Heart left ventricle (tissue), 16 donors: ENCODE measurements at regions of chr11 and their contacts with region 1.

Region 1: GRCh38 chr11:44727373-44728287 is 868 bp downstream of the TSPAN18 start:
- DNase-seq: peak; percentile 88 to 92 (median 89)
- ATAC-seq: peak; percentile 82 to 86 (median 84)
- H3K4me3 ChIP-seq: peak overlapping the region; percentile 76 to 98 (median 86)
- H3K27ac ChIP-seq: peak overlapping the region; percentile 74 to 96 (median 88)
- H3K4me1 ChIP-seq: peaks cover 0 to 70% (median 48%) of the 10 kb centered on the region in 12 donors
- H3K27me3 ChIP-seq: peaks cover 0 to 26% (median 0%) of the 10 kb centered on the region in 9 donors
- CTCF ChIP-seq: peak; percentile 93 to 98 (median 96)
- POLR2A ChIP-seq: no peak

Region 2: DNA sequence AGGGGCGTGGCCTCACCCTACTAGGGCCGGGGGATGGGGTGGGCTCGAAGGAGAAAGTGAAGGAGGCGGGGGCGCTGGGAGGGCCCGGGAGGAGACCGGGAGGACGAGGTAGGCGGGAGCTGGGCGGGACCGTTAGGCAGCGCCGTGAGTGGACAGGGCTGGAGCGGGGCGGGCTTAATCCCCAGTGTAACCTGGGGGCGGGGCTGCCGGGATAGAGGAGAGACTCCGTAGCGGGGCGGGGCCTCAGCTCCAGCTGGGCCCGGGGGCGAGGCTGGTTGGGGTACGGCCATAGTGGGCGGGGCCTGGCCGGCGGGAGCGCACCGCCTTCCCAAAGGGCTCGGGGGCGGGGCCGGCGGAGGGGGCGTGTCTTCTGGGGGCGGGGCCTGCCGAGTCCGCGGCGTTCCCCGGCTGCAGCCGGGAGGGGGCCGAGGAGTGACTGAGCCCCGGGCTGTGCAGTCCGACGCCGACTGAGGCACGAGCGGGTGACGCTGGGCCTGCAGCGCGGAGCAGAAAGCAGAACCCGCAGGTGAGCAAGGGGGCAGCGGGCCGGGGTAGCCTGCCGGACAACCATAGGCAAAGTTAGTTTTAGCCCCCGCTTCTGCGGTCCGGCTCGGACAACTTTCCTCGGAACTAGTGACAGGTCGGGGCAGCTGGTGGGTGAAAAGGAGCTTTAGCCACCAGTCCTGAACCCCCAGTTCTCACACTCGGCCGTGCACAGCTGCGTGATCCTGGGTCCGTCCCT is 162.2 kb before region 1 on chr11 and contains the start of gene CD82:
- intact Hi-C with region 1: loop called in 4 of 10 experiments (anchors 5 to 10 kb)
- DNase-seq: peak; percentile 100
- ATAC-seq: peak; percentile 96 to 97 (median 96)
- H3K4me3 ChIP-seq: peak within 1 kb of the TSS; percentile 28 to 74 (median 60)
- H3K27ac ChIP-seq: peak within 1 kb of the TSS; percentile 90 to 99 (median 96)
- H3K4me1 ChIP-seq: peaks cover 20 to 67% (median 45%) of the 10 kb centered on the region in 12 donors
- H3K27me3 ChIP-seq: no peaks in the 10 kb centered on the region
- CTCF ChIP-seq: peak in 9 of 12 donors; percentile 8 to 54 (median 40)
- POLR2A ChIP-seq: peak in 1 of 2 donors; percentile 84
- total RNA-seq, gene CD82: 20.1 to 76.2 (median 37.3) TPM

Region 3: DNA sequence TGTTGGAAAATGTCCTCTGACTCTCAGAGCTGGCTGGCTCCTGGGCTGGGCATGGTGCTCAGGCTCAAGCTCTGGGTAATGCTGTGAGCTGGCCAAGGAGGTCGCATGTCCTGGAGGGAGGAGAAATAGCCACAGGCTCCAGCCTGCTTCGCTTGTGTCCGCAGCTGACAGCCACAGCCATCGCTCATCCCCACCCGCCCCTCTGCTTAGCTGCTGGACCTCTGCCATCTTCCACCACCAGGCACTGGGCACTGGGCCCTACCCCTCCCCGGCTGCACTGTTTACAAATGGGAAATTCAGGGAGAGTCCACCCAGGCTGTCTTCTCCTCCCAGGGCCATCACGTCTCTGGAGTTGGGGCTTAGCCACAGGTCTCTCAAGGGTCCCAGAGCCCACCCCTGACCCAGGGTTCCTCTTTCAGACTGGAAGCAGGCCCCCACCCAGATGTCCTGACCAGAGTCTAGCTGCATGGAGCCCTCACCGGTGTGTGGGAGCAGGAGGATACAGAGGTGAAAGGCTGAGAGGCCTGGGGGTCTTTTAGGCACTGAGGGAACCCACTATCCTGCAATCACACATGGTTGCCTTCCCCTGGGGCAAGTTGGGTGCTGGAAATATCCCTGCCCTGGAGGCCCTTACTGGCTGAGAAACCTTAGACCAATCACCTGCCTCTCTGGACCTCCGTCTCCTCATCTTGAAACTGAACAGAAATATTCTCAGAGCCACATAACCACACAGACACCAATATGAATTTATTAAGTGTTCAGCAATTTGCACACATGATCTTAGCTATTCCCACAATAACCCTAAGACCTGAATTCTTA is 99.5 kb before region 1 on chr11:
- intact Hi-C with region 1: loop called in 8 of 10 experiments (anchors 2 to 10 kb)
- DNase-seq: peak; percentile 84 to 90 (median 85)
- ATAC-seq: peak; percentile 76 to 87 (median 84)
- H3K4me3 ChIP-seq: no peak overlapping the region
- H3K27ac ChIP-seq: peak overlapping the region; percentile 42 to 87 (median 76)
- H3K4me1 ChIP-seq: peaks cover 7 to 64% (median 38%) of the 10 kb centered on the region in 12 donors
- H3K27me3 ChIP-seq: no peaks in the 10 kb centered on the region
- CTCF ChIP-seq: peak in 4 of 12 donors; percentile 9 to 19 (median 12)
- POLR2A ChIP-seq: no peak

Region 4: DNA sequence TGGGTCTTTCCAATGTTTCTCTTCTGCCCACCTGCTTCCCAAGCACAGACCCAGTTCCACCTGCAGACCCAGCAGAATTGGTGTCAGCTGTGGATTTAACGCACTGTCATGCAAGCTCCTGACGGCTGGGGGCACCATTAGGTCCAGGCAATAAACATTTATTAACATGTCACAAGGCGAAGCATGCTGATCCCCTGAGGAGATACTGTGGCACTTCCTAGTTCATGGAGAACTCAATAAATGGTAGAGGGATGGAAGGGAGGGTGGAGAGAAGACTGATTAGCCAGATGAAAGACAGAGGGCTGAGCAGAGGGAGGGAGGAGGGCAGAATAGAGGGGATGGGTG is 69.2 kb before region 1 on chr11:
- intact Hi-C with region 1: loop called in 2 of 10 experiments (anchors 2 to 5 kb)
- DNase-seq: no peak
- ATAC-seq: no peak
- H3K4me3 ChIP-seq: no peak overlapping the region
- H3K27ac ChIP-seq: no peak overlapping the region
- H3K4me1 ChIP-seq: peaks cover 0 to 29% (median 3%) of the 10 kb centered on the region in 12 donors
- H3K27me3 ChIP-seq: no peaks in the 10 kb centered on the region
- CTCF ChIP-seq: peak in 9 of 12 donors; percentile 6 to 39 (median 23)
- POLR2A ChIP-seq: no peak

Region 5: DNA sequence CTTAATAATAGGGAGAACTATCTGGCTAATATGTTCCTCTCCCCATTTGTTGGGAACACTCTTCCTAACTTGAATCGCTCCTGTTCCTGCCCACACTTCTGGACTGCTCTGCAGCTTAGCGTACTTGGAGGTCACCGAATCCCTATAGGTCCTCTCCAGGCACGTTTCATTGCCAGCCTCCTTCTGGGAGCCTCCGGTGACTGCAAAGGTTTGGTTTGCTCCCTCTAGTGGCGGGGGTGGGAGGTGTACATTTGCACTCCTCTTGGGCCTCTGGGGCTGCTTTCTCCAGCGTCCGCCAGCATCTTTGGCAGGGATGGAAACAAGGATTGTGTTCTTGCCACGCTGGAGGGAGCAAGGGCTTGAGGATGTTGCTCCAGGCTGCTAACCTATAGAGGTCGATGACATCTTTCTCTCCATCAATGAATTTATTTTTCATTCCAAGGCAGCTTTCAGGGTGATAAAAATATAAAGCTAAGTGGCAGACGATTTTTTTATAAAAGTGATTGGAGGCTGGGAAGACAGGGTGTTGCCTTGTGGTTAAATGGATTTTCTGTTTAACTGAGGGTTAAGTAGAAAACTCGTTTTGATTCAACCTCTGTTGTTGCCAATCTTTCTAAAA is 47.8 kb after region 1 on chr11:
- intact Hi-C with region 1: loop called (anchors 2 to 5 kb)
- DNase-seq: peak; percentile 50 to 75 (median 71)
- ATAC-seq: peak; percentile 21 to 53 (median 45)
- H3K4me3 ChIP-seq: no peak overlapping the region
- H3K27ac ChIP-seq: peak overlapping the region in 11 of 12 donors; percentile 29 to 92 (median 76)
- H3K4me1 ChIP-seq: peaks cover 7 to 91% (median 65%) of the 10 kb centered on the region in 12 donors
- H3K27me3 ChIP-seq: no peaks in the 10 kb centered on the region
- CTCF ChIP-seq: peak; percentile 56 to 77 (median 66)
- POLR2A ChIP-seq: no peak

Region 6: GRCh38 chr11:44893846-44894617 is 166.4 kb after region 1 on chr11:
- intact Hi-C with region 1: loop called (anchors 1 to 5 kb)
- DNase-seq: peak; percentile 69 to 84 (median 83)
- ATAC-seq: peak; percentile 84 to 92 (median 88)
- H3K4me3 ChIP-seq: no peak overlapping the region
- H3K27ac ChIP-seq: peak overlapping the region in 8 of 12 donors; percentile 18 to 78 (median 57)
- H3K4me1 ChIP-seq: peaks cover 0 to 39% (median 20%) of the 10 kb centered on the region in 12 donors
- H3K27me3 ChIP-seq: no peaks in the 10 kb centered on the region
- CTCF ChIP-seq: peak; percentile 80 to 95 (median 88)
- POLR2A ChIP-seq: no peak

Region 7: GRCh38 chr11:45021692-45022141 is 294.1 kb after region 1 on chr11:
- intact Hi-C with region 1: no loop called
- DNase-seq: peak; percentile 79 to 89 (median 82)
- ATAC-seq: peak; percentile 58 to 89 (median 72)
- H3K4me3 ChIP-seq: no peak overlapping the region
- H3K27ac ChIP-seq: peak overlapping the region in 10 of 12 donors; percentile 7 to 67 (median 46)
- H3K4me1 ChIP-seq: peaks cover 10 to 59% (median 33%) of the 10 kb centered on the region in 12 donors
- H3K27me3 ChIP-seq: no peaks in the 10 kb centered on the region
- CTCF ChIP-seq: peak in 6 of 12 donors; percentile 11 to 36 (median 23)
- POLR2A ChIP-seq: no peak

Region 8: DNA sequence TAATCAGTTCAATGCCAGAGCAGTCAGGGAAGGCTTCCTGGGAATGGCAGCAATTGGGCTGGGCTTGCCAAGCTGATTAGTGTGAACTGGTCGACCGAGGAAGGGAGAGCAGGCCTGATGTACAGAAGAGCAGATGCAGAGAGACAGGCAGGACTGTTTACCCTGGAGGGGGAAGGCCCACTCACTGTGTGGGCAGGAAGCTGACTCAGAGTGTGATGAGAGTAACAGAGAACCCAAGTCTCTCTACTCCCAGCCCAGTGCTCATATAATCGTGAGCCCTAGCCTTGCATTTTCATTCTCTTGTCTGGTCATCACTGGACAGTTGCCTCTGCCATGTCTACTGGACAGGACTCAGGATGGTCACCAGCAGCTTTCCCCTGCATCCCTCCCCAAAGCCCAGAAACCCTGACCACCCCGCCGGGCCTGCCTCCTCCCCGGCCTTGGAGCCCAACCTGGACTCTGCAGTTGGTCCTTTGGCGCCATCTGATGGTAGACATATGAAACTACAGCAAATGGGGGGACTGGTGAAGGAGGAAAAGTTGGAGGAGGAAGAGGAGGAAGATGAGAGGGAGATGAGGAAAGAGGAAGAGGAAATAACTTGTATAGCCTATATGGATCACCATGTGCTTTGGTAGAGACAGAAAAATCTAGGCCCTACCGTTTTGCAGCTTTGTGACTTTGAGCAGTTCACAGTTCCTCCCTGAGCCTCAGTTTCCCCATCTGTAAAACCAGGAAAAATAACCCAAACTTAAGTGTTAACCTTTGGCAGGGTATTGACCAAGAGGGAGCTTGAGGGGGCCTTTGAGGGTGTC is 375.4 kb after region 1 on chr11:
- intact Hi-C with region 1: loop called in 1 of 10 experiments (anchors 10 kb)
- DNase-seq: peak; percentile 58 to 81 (median 62)
- ATAC-seq: peak in 3 of 4 donors; percentile 62 to 81 (median 67)
- H3K4me3 ChIP-seq: no peak overlapping the region
- H3K27ac ChIP-seq: peak overlapping the region in 1 of 12 donors; percentile 66
- H3K4me1 ChIP-seq: peaks cover 0 to 25% (median 10%) of the 10 kb centered on the region in 12 donors
- H3K27me3 ChIP-seq: peaks cover 0 to 9% (median 0%) of the 10 kb centered on the region in 9 donors
- CTCF ChIP-seq: peak; percentile 85 to 99 (median 96)
- POLR2A ChIP-seq: no peak